ENCODE measurements at regions of chr1 and their contacts with region 1.

Region 1: DNA sequence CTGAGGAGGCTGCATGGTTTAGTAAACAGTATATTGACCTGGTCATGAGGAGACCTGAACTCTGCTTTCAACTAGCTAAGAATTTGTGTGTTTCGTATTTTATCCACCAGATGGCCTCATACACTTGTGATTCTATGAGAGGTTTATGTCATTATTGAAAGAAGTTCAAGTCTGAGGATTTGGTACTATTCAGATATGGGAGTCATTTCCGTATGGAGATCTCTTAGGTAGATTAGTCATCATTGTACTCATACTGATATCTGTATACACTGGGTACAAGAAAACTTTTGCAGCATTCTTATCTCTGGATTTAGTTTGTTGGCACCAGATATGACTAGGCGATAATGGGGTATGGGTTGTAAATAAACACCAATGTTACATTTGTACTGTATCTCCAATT is 26.6 kb downstream of the ATF6 start:
- DNase-seq: no peak
- ATAC-seq: peak; percentile 55 to 82 (median 63)
- H3K4me3 ChIP-seq: no peak overlapping the region
- H3K27ac ChIP-seq: no peak overlapping the region
- H3K4me1 ChIP-seq: no peaks in the 10 kb centered on the region
- H3K27me3 ChIP-seq: no peaks in the 10 kb centered on the region
- CTCF ChIP-seq: peak; percentile 66

Region 2: GRCh38 chr1:161855260-161855659 is 62.5 kb after region 1 on chr1:
- intact Hi-C with region 1: loop called in 1 of 2 experiments (anchors 5 kb)
- DNase-seq: no peak
- ATAC-seq: no peak
- H3K4me3 ChIP-seq: no peak overlapping the region
- H3K27ac ChIP-seq: no peak overlapping the region
- H3K4me1 ChIP-seq: no peaks in the 10 kb centered on the region
- H3K27me3 ChIP-seq: no peaks in the 10 kb centered on the region
- CTCF ChIP-seq: no peak

Region 3: GRCh38 chr1:162035241-162035640 is 242.5 kb after region 1 on chr1:
- intact Hi-C with region 1: loop called (anchors 1 to 2 kb)
- DNase-seq: no peak
- ATAC-seq: no peak
- H3K4me3 ChIP-seq: no peak overlapping the region
- H3K27ac ChIP-seq: no peak overlapping the region
- H3K4me1 ChIP-seq: peaks cover 8% of the 10 kb centered on the region
- H3K27me3 ChIP-seq: no peaks in the 10 kb centered on the region
- CTCF ChIP-seq: no peak

Region 4: GRCh38 chr1:162040681-162041080 is 247.9 kb after region 1 on chr1:
- intact Hi-C with region 1: loop called (anchors 1 to 2 kb)
- DNase-seq: no peak
- ATAC-seq: no peak
- H3K4me3 ChIP-seq: no peak overlapping the region
- H3K27ac ChIP-seq: no peak overlapping the region
- H3K4me1 ChIP-seq: no peaks in the 10 kb centered on the region
- H3K27me3 ChIP-seq: no peaks in the 10 kb centered on the region
- CTCF ChIP-seq: no peak

Measured in psoas muscle (tissue), 8 donors.